ENCODE measurements at regions of chr17 and their contacts with region 1.

Region 1: GRCh38 chr17:31842183-31843069 is 16.6 kb downstream of the COPRS start:
- DNase-seq: peak; percentile 83
- ATAC-seq: peak; percentile 88
- H3K4me3 ChIP-seq: peak overlapping the region in 1 of 5 experiments; percentile 8
- H3K4me3 Mint-ChIP-seq: no peak overlapping the region
- H3K27ac ChIP-seq: no peak overlapping the region
- H3K27ac Mint-ChIP-seq: no peak overlapping the region
- H3K4me1 ChIP-seq: peaks cover 5 to 6% of the 10 kb centered on the region in 2 donors
- H3K4me1 Mint-ChIP-seq: no peaks in the 10 kb centered on the region
- H3K27me3 ChIP-seq: peaks cover 0 to 8% (median 4%) of the 10 kb centered on the region in 4 experiments
- H3K27me3 Mint-ChIP-seq: peaks cover 17% of the 10 kb centered on the region
- CTCF ChIP-seq: peak; percentile 95

Region 2: GRCh38 chr17:31388770-31389661 is 453.4 kb before region 1 on chr17:
- CTCF ChIA-PET with region 1: interaction called, 60 read pairs
- POLR2A ChIA-PET with region 1: no interaction called
- intact Hi-C with region 1: no loop called
- DNase-seq: peak; percentile 70
- ATAC-seq: peak; percentile 62
- H3K4me3 ChIP-seq: no peak overlapping the region
- H3K4me3 Mint-ChIP-seq: peak overlapping the region; percentile 77
- H3K27ac ChIP-seq: no peak overlapping the region
- H3K27ac Mint-ChIP-seq: no peak overlapping the region
- H3K4me1 ChIP-seq: peaks cover 16 to 17% of the 10 kb centered on the region in 2 donors
- H3K4me1 Mint-ChIP-seq: peaks cover 15% of the 10 kb centered on the region
- H3K27me3 ChIP-seq: peaks cover 0 to 45% (median 20%) of the 10 kb centered on the region in 4 experiments
- H3K27me3 Mint-ChIP-seq: peaks cover 40% of the 10 kb centered on the region
- CTCF ChIP-seq: peak; percentile 77

Region 3: DNA sequence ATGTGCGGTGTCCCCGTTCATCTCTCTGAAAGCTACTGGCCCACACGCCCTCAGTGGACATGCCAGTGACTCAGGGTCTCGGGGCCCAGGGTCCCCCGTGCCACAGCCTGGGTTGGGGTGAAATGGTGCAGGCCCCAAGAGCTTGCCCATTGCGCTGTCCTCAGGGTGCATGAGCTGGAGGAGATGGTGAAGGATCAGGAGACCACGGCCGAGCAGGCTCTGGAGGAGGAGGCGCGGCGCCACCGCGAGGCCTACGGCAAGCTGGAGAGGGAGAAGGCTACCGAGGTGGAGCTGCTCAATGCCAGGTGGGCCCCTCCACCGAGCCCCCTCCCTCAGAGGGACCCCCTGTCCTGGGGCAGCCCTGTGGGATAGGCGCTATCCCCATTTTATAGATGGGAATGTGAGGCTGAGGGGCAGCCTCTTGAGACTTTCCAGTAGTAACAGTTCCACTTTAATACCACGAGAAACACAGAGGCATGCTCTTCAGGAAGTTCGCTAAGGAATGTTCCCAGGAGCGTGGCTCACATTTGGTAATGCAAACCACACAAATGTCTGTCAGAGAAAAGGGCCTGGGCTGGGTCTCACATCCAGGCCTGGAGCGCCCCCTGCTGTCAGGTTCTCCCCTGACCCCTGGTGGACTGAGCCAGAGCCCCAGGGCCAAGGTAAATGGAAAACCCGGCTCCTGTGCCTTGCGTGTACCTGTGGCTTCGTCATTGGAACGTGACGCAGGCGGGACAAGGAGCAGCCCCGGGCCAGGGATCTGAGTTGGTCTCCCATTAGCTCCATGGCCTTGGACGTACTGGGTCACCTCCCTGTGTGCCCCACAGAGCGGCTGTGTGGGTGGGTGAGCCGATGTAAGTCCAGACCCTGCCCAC is 317.3 kb before region 1 on chr17:
- CTCF ChIA-PET with region 1: interaction called, 262 read pairs
- POLR2A ChIA-PET with region 1: no interaction called
- intact Hi-C with region 1: loop called (anchors 1 kb)
- DNase-seq: peak; percentile 86
- ATAC-seq: peak; percentile 79
- H3K4me3 ChIP-seq: no peak overlapping the region
- H3K4me3 Mint-ChIP-seq: no peak overlapping the region
- H3K27ac ChIP-seq: no peak overlapping the region
- H3K27ac Mint-ChIP-seq: peak overlapping the region; percentile 65
- H3K4me1 ChIP-seq: peaks cover 0 to 13% of the 10 kb centered on the region in 2 donors
- H3K4me1 Mint-ChIP-seq: peaks cover 9% of the 10 kb centered on the region
- H3K27me3 ChIP-seq: no peaks in the 10 kb centered on the region
- H3K27me3 Mint-ChIP-seq: no peaks in the 10 kb centered on the region
- CTCF ChIP-seq: peak; percentile 89

Region 4: DNA sequence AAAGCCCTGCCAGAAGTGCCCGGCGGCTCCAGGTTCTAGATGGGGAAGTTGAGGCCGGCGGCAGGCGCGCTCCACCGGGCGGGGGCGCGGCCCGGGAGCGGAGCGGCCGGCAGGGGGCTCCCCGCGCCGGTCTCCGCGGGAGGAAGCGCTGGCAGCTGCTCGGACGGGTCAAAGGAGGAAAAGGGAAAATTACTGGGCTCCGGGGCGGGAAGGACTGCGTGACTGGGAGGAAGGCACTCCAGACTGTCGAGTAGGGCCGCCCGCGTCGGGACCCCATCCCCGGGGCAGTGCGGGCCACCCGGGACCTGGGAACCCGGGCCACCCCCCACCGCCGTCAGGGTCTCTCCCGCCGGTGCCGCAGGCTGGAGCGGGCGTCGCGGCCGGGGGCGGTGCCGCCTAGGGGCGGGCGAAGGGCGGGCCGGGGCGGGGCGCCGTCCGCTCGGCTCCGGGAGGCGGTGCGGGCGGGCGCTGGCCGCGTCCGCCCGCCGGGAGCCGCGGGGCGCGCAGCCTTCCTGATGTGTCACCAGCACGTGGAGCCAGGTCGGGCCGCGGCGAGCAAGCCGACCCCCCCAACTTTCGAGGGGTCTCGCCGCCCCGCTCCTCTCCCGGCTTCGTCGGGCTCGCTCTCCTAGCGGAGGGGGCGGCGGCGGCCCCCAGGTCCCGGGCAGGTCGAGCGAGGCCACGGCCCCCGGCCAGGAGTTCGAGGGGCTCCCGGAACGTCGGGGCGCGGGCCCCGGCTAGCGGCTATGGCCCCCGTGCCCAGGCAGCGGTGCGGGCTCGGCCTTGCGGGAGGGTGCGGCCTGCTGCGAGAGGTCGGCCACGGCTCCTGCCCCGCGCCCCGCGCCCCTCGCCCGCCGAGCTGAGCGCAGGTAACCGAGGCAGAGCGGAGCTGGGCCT is 283.4 kb before region 1 on chr17:
- CTCF ChIA-PET with region 1: interaction called, 74 read pairs
- POLR2A ChIA-PET with region 1: interaction called, 4 read pairs
- intact Hi-C with region 1: loop called (anchors 1 kb)
- DNase-seq: peak; percentile 78
- ATAC-seq: peak; percentile 94
- H3K4me3 ChIP-seq: peak overlapping the region in 4 of 5 experiments; percentile 39 to 82 (median 60)
- H3K4me3 Mint-ChIP-seq: peak overlapping the region; percentile 72
- H3K27ac ChIP-seq: no peak overlapping the region
- H3K27ac Mint-ChIP-seq: peak overlapping the region; percentile 20
- H3K4me1 ChIP-seq: peaks cover 15 to 27% of the 10 kb centered on the region in 2 donors
- H3K4me1 Mint-ChIP-seq: peaks cover 27% of the 10 kb centered on the region
- H3K27me3 ChIP-seq: peaks cover 0 to 7% (median 2%) of the 10 kb centered on the region in 4 experiments
- H3K27me3 Mint-ChIP-seq: no peaks in the 10 kb centered on the region
- CTCF ChIP-seq: peak; percentile 61

Region 5: GRCh38 chr17:31858642-31859473 is 16.4 kb after region 1 on chr17 and contains the start of gene COPRS:
- CTCF ChIA-PET with region 1: interaction called, 20 read pairs
- POLR2A ChIA-PET with region 1: no interaction called
- intact Hi-C with region 1: no loop called
- DNase-seq: peak; percentile 88
- ATAC-seq: peak; percentile 94
- H3K4me3 ChIP-seq: peak within 1 kb of the TSS; percentile 46 to 71 (median 54)
- H3K4me3 Mint-ChIP-seq: peak within 1 kb of the TSS; percentile 93
- H3K27ac ChIP-seq: peak within 1 kb of the TSS in 1 of 2 donors; percentile 48
- H3K27ac Mint-ChIP-seq: peak within 1 kb of the TSS; percentile 89
- H3K4me1 ChIP-seq: peaks cover 11 to 16% of the 10 kb centered on the region in 2 donors
- H3K4me1 Mint-ChIP-seq: peaks cover 24% of the 10 kb centered on the region
- H3K27me3 ChIP-seq: no peaks in the 10 kb centered on the region
- H3K27me3 Mint-ChIP-seq: no peaks in the 10 kb centered on the region
- CTCF ChIP-seq: no peak
- total RNA-seq, gene COPRS: 17.1 and 17.6 TPM in 2 replicates